Endothelial cell of umbilical vein (primary cell): ENCODE measurements at regions of chr2 and their contacts with region 1.

Region 1: DNA sequence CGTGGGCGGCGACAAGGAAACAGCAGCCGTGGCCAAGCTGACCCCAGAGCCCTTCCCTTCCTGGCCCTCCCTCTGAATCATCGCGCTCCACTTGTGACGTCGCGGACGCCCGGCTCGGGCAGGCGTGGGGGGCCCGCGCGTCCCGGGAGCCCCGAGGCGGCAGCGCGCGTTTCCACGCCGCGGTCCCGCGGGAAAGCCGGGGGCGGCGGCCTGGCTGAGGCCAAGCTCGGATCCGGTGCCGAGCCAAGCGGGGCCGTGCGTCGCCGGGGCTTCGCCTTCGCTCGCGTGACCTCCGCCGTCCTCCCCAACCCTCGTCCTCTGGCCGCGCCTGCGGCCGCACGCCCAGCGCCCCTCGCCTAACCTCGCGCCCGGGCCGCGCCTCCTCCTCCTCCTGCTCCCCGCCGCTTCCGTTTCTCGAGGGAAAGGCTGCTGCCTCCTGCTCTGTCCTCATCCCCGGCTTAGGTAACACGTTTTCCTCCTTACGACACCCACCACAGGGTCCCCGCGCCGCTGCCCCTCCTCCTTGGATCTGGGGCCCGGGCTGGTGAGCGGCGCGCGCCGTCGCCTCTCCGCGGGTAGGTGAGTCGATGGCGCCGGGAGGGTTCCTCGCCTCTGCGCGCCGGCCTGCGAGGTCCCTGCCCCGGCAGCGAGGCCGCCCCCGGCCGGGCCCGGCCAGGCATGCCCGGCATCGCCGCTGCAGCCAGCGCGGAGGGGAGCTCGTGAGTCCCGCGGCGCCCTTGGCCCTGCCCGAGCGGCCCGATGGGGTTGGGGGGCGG is at the start of gene INPP1:
- DNase-seq: peak; percentile 79
- H3K4me3 ChIP-seq: peak within 1 kb of the TSS; percentile 58 to 90 (median 67)
- H3K27ac ChIP-seq: peak within 1 kb of the TSS; percentile 73
- H3K4me1 ChIP-seq: peaks cover 14% of the 10 kb centered on the region
- H3K27me3 ChIP-seq: no peaks in the 10 kb centered on the region
- CTCF ChIP-seq: no peak
- POLR2A ChIP-seq: peak; percentile 63
- total RNA-seq, gene INPP1: 32.6 and 36.8 TPM in 2 replicates

Region 2: DNA sequence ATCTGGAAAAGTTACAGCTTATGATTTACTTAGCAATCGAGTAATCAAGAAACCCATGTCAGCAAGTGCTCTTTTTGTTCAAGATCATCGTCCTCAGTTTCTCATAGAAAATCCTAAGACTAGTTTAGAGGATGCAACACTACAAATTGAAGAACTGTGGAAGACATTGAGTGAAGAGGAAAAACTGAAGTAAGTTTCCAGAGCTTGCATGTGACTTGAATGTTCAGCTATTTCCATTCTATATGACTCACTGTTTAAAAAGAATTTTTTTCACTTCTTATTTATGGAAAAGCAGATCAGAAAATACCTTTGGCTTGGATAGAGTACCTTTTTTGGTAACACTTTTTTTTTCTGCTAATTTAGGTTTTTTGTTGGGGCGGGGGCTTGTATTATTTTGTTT is 488.7 kb before region 1 on chr2:
- CTCF ChIA-PET with region 1: no interaction called
- POLR2A ChIA-PET with region 1: no interaction called
- dilution Hi-C with region 1: no loop called
- intact Hi-C with region 1: no loop called
- DNase-seq: no peak
- H3K4me3 ChIP-seq: no peak overlapping the region
- H3K27ac ChIP-seq: no peak overlapping the region
- H3K4me1 ChIP-seq: no peaks in the 10 kb centered on the region
- H3K27me3 ChIP-seq: no peaks in the 10 kb centered on the region
- CTCF ChIP-seq: no peak
- POLR2A ChIP-seq: no peak

Region 3: GRCh38 chr2:190277234-190278112 is 66.2 kb before region 1 on chr2:
- CTCF ChIA-PET with region 1: interaction called, 3 read pairs
- POLR2A ChIA-PET with region 1: no interaction called
- dilution Hi-C with region 1: no loop called
- intact Hi-C with region 1: loop called (anchors 2 kb)
- DNase-seq: peak; percentile 70
- H3K4me3 ChIP-seq: no peak overlapping the region
- H3K27ac ChIP-seq: peak overlapping the region; percentile 8
- H3K4me1 ChIP-seq: peaks cover 2% of the 10 kb centered on the region
- H3K27me3 ChIP-seq: no peaks in the 10 kb centered on the region
- CTCF ChIP-seq: peak; percentile 34 to 39
- POLR2A ChIP-seq: no peak

Region 4: DNA sequence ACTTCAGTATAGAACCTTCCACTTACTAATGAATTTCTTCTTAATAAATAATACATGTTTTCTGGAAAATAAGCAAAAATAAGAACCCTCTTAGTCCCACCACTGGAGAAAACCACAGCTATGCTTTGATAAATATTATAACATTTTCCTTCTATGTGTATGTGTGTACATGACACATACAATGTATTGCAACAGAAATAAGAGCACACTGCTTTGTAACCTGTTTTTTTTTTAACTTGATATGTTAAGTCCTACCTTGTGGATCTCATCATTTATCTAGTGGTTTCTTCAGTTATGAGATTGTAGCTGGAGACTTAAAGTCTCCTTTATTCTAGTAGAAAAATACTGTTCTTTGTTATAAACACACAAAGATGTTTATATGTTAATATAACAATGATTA is 16.9 kb after region 1 on chr2:
- CTCF ChIA-PET with region 1: interaction called, 20 read pairs
- POLR2A ChIA-PET with region 1: interaction called, 4 read pairs
- dilution Hi-C with region 1: no loop called
- intact Hi-C with region 1: no loop called
- DNase-seq: no peak
- H3K4me3 ChIP-seq: no peak overlapping the region
- H3K27ac ChIP-seq: no peak overlapping the region
- H3K4me1 ChIP-seq: peaks cover 5% of the 10 kb centered on the region
- H3K27me3 ChIP-seq: no peaks in the 10 kb centered on the region
- CTCF ChIP-seq: no peak
- POLR2A ChIP-seq: no peak

Region 5: GRCh38 chr2:190376591-190377245 is 33.0 kb after region 1 on chr2:
- CTCF ChIA-PET with region 1: interaction called, 3 read pairs
- POLR2A ChIA-PET with region 1: no interaction called
- dilution Hi-C with region 1: no loop called
- intact Hi-C with region 1: loop called (anchors 2 kb)
- DNase-seq: no peak
- H3K4me3 ChIP-seq: no peak overlapping the region
- H3K27ac ChIP-seq: no peak overlapping the region
- H3K4me1 ChIP-seq: no peaks in the 10 kb centered on the region
- H3K27me3 ChIP-seq: peaks cover 0 to 4% of the 10 kb centered on the region in 2 experiments
- CTCF ChIP-seq: no peak
- POLR2A ChIP-seq: no peak